ENCODE measurements at regions of chr4 and their contacts with region 1.

Region 1: DNA sequence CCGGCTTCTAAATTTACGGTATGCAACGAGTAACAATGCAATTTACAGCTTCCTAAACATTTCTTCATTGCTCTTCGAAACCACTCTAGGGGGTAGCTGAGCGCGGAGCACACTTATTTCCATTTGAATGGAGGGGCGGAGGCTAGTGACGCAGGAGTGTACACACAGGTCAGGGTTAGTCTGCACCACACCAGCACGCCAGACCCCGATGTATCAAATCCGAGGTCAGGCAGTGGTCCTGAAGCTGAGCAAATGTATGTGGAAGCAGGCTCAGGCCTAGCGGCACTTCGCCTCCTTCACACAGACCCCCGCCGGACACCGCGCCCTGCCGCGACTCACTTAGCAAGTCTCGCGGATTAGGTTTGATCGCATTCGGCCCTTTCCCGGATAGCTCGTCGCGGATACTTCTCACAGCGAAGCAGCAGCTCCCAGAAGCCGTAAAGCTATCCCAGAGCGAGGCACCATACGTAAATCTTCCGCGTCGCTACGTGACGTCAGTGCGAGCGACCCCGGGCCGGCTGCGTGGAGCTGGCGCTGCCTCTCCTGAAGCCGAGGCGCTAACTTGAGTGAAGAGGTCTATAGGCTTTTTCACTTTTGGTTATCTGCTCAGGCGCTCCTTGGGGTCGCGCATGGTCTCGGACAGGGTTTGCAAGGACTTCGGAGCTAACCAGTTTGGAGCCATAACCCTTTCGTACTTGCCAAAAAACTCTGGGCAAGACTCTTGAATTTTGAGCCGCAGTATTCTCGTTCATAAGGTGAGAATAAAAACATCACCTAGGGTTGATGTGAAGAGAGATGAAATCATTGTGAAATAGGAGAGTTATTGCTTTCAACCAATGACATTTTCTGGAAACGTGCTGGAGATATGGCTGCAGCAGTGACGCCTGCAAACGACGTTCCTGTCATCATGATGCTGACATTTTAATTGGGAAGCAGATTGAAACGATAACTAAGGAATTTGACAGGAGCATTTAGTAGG is at the start of gene AASDH:
- DNase-seq: peak; percentile 96
- ATAC-seq: peak; percentile 93
- H3K4me3 Mint-ChIP-seq: peak within 1 kb of the TSS; percentile 94
- H3K27ac Mint-ChIP-seq: peak within 1 kb of the TSS; percentile 99
- H3K4me1 Mint-ChIP-seq: peaks cover 21% of the 10 kb centered on the region
- H3K27me3 Mint-ChIP-seq: no peaks in the 10 kb centered on the region
- total RNA-seq, gene AASDH: 10.3 to 12.8 TPM

Region 2: GRCh38 chr4:55948726-55949474 is 438.4 kb before region 1 on chr4 and contains the start of gene CEP135:
- POLR2A ChIA-PET with region 1: interaction called, 17 read pairs
- DNase-seq: peak; percentile 96
- ATAC-seq: peak; percentile 79
- H3K4me3 Mint-ChIP-seq: peak within 1 kb of the TSS; percentile 83
- H3K27ac Mint-ChIP-seq: peak within 1 kb of the TSS; percentile 82
- H3K4me1 Mint-ChIP-seq: peaks cover 22% of the 10 kb centered on the region
- H3K27me3 Mint-ChIP-seq: no peaks in the 10 kb centered on the region
- total RNA-seq, gene CEP135: 18.3 to 18.8 TPM

Region 3: DNA sequence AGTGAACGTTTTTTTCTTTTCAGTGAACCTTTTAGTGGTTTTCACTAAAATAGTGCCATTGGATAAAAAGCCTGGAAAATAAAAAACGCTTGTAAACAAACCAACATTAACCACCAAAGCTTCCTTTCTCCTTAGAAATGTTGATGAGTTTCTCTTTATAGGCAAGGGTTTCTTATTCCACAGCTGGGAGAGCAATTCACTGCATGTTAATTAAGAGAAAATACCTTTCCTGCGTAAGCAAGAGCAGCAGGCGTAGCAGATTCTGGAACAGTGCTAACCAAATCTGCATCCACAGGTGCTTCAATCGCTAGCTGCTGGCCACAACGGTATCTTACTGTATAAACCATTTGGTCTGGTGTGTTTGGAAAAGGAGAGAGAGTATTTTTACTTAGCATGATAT is 13.2 kb after region 1 on chr4:
- POLR2A ChIA-PET with region 1: interaction called, 11 read pairs
- DNase-seq: no peak
- ATAC-seq: no peak
- H3K4me3 Mint-ChIP-seq: no peak overlapping the region
- H3K27ac Mint-ChIP-seq: no peak overlapping the region
- H3K4me1 Mint-ChIP-seq: no peaks in the 10 kb centered on the region
- H3K27me3 Mint-ChIP-seq: no peaks in the 10 kb centered on the region